Adrenal gland (tissue), 19 donors: ENCODE measurements at regions of chr1 and their contacts with region 1.

Region 1: GRCh38 chr1:93629099-93630059 is 52.3 kb downstream of the BCAR3 start:
- DNase-seq: peak in 5 of 7 donors; percentile 42 to 75 (median 64)
- H3K4me3 ChIP-seq: no peak overlapping the region
- H3K27ac ChIP-seq: peak overlapping the region in 1 of 5 donors; percentile 3
- H3K4me1 ChIP-seq: peaks cover 0 to 21% of the 10 kb centered on the region in 2 donors
- H3K27me3 ChIP-seq: no peaks in the 10 kb centered on the region
- CTCF ChIP-seq: peak; percentile 62 to 91 (median 90)
- POLR2A ChIP-seq: no peak

Region 2: DNA sequence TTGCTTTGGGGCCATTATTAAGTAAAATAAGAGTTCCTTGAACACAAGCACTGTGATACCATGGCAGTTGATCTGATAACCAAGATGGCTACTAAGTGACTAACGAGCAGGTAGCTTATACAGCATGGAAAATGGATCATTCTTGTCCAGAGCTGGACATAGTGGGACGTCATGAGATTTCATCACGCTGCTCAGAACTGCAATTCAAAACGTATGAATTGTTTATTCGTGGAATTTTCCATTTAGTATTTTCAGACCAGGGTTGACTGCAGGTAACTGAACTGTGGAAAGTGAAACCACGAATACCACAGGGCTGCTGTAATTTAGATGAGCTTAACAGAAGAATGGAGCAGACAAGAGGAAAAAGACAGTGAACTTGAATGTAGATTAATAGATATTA is 409.9 kb before region 1 on chr1:
- intact Hi-C with region 1: no loop called
- DNase-seq: no peak
- H3K4me3 ChIP-seq: no peak overlapping the region
- H3K27ac ChIP-seq: no peak overlapping the region
- H3K4me1 ChIP-seq: no peaks in the 10 kb centered on the region
- H3K27me3 ChIP-seq: no peaks in the 10 kb centered on the region
- CTCF ChIP-seq: no peak
- POLR2A ChIP-seq: no peak

Region 3: DNA sequence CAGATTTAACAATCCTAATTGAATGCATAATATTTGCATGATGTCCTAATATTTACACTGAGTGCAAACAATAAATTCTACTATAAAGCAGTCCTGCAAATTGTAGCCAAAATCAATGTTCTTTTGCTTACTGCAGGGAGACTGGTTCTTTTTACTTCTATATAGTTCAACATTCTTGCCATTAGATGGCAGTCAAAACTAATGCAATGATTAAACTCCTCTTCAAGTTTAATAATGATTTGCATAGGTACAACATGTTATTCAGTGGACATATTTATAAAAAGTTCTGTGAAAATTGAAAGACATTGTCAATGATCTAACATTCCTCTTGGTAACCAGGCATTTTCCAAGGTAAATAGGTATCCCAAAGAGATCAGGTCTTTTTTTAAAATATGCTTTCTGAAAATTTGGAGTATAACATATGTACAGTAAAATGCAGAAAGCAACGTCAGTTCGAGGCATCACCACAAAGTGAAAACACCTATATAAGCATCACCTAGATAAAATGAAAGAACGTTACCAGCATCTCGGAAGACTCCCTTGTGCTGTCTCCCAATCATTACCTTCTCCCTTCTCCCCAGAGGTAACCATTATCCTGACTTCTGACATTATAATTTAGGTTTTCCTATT is 191.3 kb before region 1 on chr1:
- intact Hi-C with region 1: loop called in 1 of 2 experiments (anchors 5 kb)
- DNase-seq: no peak
- H3K4me3 ChIP-seq: no peak overlapping the region
- H3K27ac ChIP-seq: no peak overlapping the region
- H3K4me1 ChIP-seq: peaks cover 0 to 7% of the 10 kb centered on the region in 2 donors
- H3K27me3 ChIP-seq: no peaks in the 10 kb centered on the region
- CTCF ChIP-seq: peak; percentile 41 to 84 (median 72)
- POLR2A ChIP-seq: no peak

Region 4: GRCh38 chr1:93680757-93681550 is 51.6 kb after region 1 on chr1:
- intact Hi-C with region 1: loop called (anchors 5 kb)
- DNase-seq: peak; percentile 88 to 96 (median 90)
- H3K4me3 ChIP-seq: peak overlapping the region; percentile 50 to 89 (median 72)
- H3K27ac ChIP-seq: peak overlapping the region; percentile 77 to 93 (median 83)
- H3K4me1 ChIP-seq: peaks cover 21 to 30% of the 10 kb centered on the region in 2 donors
- H3K27me3 ChIP-seq: no peaks in the 10 kb centered on the region
- CTCF ChIP-seq: peak; percentile 61 to 86 (median 78)
- POLR2A ChIP-seq: peak in 1 of 2 donors; percentile 86

Region 5: DNA sequence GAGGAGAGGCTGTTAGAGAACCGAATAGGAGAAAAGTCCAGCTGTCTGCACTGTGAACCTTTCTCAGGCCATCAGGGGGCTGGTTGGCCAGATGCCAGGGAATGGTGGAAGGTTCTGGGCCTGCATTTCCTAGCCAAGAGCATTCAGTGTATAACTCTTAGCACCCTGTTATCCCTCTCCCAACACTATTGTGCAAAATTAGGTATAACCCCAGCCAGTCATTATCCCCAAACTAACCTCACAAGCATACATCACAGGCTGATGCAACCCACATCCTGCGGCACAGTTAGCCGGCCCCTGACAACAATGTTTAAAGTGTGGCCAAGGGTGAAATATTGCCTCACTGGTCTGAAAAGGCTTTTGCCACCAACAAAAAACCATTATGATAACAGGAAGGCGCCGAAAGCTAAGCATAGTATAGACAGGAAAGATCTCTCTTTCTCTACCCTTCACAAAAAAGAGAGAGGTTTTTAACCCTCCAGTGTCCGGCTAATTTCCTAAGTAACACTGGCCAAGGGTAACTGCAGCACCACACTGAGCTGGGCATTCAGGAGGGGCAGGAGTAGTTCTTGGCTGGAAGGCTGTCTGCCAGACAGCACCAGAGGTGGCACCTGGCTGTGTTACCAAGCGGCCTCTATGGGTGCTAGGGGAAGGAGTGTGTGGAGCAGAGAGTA is 129.6 kb after region 1 on chr1:
- intact Hi-C with region 1: no loop called
- DNase-seq: peak in 5 of 7 donors; percentile 23 to 33 (median 32)
- H3K4me3 ChIP-seq: no peak overlapping the region
- H3K27ac ChIP-seq: peak overlapping the region in 2 of 5 donors; percentile 48 to 63
- H3K4me1 ChIP-seq: peaks cover 0 to 10% of the 10 kb centered on the region in 2 donors
- H3K27me3 ChIP-seq: no peaks in the 10 kb centered on the region
- CTCF ChIP-seq: peak in 1 of 6 experiments; percentile 9
- POLR2A ChIP-seq: no peak